IMR-90 (cell line): ENCODE measurements at regions of chr5 and their contacts with region 1.

Region 1: GRCh38 chr5:116834796-116835515 is 260.3 kb upstream of the SEMA6A start:
- DNase-seq: no peak
- ATAC-seq: no peak
- H3K4me3 ChIP-seq: no peak overlapping the region
- H3K27ac ChIP-seq: no peak overlapping the region
- H3K4me1 ChIP-seq: no peaks in the 10 kb centered on the region
- H3K27me3 ChIP-seq: no peaks in the 10 kb centered on the region
- CTCF ChIP-seq: no peak
- POLR2A ChIP-seq: no peak
- RAD21 ChIP-seq: no peak

Region 2: DNA sequence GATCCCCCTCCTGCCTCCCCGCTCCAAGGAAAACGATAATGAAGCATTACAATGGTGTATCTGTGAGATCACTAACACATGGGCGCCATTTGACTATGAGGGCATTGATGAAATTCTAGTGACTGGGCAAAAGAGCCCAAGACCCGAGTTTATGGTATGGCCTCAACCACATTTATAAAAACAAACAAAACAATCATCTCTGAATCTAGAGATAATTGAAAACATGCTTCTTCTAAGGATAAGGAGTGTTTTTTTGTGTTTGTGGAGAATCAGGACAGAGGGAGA is 159.4 kb before region 1 on chr5:
- CTCF ChIA-PET with region 1: no interaction called
- POLR2A ChIA-PET with region 1: interaction called, 11 read pairs
- dilution Hi-C with region 1: no loop called
- in situ Hi-C with region 1: no loop called
- intact Hi-C with region 1: no loop called
- DNase-seq: no peak
- ATAC-seq: no peak
- H3K4me3 ChIP-seq: no peak overlapping the region
- H3K27ac ChIP-seq: no peak overlapping the region
- H3K4me1 ChIP-seq: no peaks in the 10 kb centered on the region
- H3K27me3 ChIP-seq: no peaks in the 10 kb centered on the region
- CTCF ChIP-seq: no peak
- POLR2A ChIP-seq: no peak
- RAD21 ChIP-seq: no peak